Transverse colon (tissue), 4 donors: ENCODE measurements at regions of chr4 and their contacts with region 1.

Region 1: GRCh38 chr4:32169841-32170240 is 1449.7 kb downstream of the PCDH7 start:
- DNase-seq: no peak
- H3K4me3 ChIP-seq: no peak overlapping the region
- H3K27ac ChIP-seq: no peak overlapping the region
- H3K4me1 ChIP-seq: no peaks in the 10 kb centered on the region
- H3K27me3 ChIP-seq: no peaks in the 10 kb centered on the region
- CTCF ChIP-seq: no peak
- EP300 ChIP-seq: no peak
- POLR2A ChIP-seq: no peak

Region 2: GRCh38 chr4:32043248-32043633 is 126.6 kb before region 1 on chr4:
- in situ Hi-C with region 1: no loop called
- intact Hi-C with region 1: no loop called
- DNase-seq: no peak
- H3K4me3 ChIP-seq: no peak overlapping the region
- H3K27ac ChIP-seq: no peak overlapping the region
- H3K4me1 ChIP-seq: peaks cover 0 to 13% (median 0%) of the 10 kb centered on the region in 4 donors
- H3K27me3 ChIP-seq: no peaks in the 10 kb centered on the region
- CTCF ChIP-seq: no peak
- EP300 ChIP-seq: no peak
- POLR2A ChIP-seq: no peak

Region 3: GRCh38 chr4:32119907-32120306 is 49.9 kb before region 1 on chr4:
- in situ Hi-C with region 1: no loop called
- intact Hi-C with region 1: loop called (anchors 2 kb)
- DNase-seq: no peak
- H3K4me3 ChIP-seq: no peak overlapping the region
- H3K27ac ChIP-seq: peak overlapping the region in 3 of 4 donors; percentile 50 to 57 (median 54)
- H3K4me1 ChIP-seq: peaks cover 0 to 14% (median 3%) of the 10 kb centered on the region in 4 donors
- H3K27me3 ChIP-seq: no peaks in the 10 kb centered on the region
- CTCF ChIP-seq: no peak
- EP300 ChIP-seq: no peak
- POLR2A ChIP-seq: no peak